Prostate gland (tissue), 2 donors: ENCODE measurements at regions of chr3 and their contacts with region 1.

Region 1: GRCh38 chr3:182837855-182838454 is 44.7 kb downstream of the ATP11B start:
- DNase-seq: no peak
- H3K4me3 ChIP-seq: no peak overlapping the region
- H3K27ac ChIP-seq: no peak overlapping the region
- H3K4me1 ChIP-seq: no peaks in the 10 kb centered on the region
- H3K27me3 ChIP-seq: no peaks in the 10 kb centered on the region
- CTCF ChIP-seq: peak in 3 of 4 experiments; percentile 42 to 50 (median 46)
- POLR2A ChIP-seq: no peak

Region 2: DNA sequence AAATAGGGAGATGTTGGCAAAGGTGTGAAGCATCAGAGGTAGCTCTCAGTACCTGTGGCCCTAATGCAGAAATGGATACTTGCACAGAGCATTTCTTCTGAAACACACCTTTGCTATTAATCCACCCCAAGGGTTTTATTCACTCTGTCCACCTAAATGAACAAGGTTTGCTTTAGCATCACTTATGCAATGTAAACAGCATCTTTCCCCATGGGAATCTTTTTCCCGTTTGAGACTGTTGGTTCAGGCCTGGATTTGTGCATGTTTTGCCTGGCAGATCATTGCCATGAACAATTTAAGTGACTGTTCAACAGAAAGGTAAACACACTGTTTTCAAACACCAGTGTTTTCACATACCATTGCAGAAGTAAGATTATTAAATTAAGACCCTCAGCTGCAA is 617.9 kb before region 1 on chr3:
- intact Hi-C with region 1: no loop called
- DNase-seq: no peak
- H3K4me3 ChIP-seq: no peak overlapping the region
- H3K27ac ChIP-seq: no peak overlapping the region
- H3K4me1 ChIP-seq: no peaks in the 10 kb centered on the region
- H3K27me3 ChIP-seq: no peaks in the 10 kb centered on the region
- CTCF ChIP-seq: no peak
- POLR2A ChIP-seq: no peak

Region 3: DNA sequence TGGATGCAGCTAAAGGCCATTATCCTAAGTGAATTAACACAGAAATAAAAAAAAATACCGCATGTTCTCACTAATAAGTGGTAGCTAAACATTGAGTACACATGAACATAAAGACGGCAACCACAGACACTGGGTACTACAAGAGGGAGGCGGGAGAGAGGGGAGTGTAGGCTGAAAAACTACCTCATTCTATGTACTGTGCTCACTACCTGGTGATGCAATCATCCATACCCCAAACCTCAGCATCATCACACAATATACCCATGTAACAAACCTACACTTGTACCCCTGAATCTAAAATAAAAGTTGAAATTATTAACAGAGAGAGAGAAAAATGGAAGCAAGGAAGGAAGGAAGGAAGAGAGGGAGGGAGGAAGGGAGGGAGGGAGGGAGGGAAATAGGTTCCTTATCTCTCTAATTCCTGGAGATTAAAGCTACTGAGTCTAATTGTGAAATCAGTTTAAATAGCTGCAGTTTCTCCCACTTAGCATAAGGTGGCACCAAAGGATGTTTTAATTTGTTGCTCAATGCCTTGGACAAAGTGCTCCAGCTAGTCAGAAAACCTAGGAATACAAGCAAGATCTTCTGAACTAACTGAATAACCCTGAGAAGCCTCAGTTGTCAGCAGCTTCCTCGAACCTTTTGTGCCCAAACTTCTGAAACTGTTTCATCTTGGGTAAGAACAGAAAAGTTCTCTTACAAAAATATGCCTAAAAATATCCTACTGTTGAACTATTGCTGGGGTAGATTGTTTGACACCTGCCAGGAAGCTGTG is 124.0 kb before region 1 on chr3:
- intact Hi-C with region 1: loop called (anchors 5 kb)
- DNase-seq: no peak
- H3K4me3 ChIP-seq: no peak overlapping the region
- H3K27ac ChIP-seq: no peak overlapping the region
- H3K4me1 ChIP-seq: no peaks in the 10 kb centered on the region
- H3K27me3 ChIP-seq: no peaks in the 10 kb centered on the region
- CTCF ChIP-seq: peak in 3 of 4 experiments; percentile 29 to 70 (median 68)
- POLR2A ChIP-seq: no peak

Region 4: GRCh38 chr3:182909318-182910040 is 71.5 kb after region 1 on chr3:
- intact Hi-C with region 1: no loop called
- DNase-seq: no peak
- H3K4me3 ChIP-seq: no peak overlapping the region
- H3K27ac ChIP-seq: no peak overlapping the region
- H3K4me1 ChIP-seq: no peaks in the 10 kb centered on the region
- H3K27me3 ChIP-seq: no peaks in the 10 kb centered on the region
- CTCF ChIP-seq: peak in 3 of 4 experiments; percentile 27 to 49 (median 40)
- POLR2A ChIP-seq: no peak

Region 5: DNA sequence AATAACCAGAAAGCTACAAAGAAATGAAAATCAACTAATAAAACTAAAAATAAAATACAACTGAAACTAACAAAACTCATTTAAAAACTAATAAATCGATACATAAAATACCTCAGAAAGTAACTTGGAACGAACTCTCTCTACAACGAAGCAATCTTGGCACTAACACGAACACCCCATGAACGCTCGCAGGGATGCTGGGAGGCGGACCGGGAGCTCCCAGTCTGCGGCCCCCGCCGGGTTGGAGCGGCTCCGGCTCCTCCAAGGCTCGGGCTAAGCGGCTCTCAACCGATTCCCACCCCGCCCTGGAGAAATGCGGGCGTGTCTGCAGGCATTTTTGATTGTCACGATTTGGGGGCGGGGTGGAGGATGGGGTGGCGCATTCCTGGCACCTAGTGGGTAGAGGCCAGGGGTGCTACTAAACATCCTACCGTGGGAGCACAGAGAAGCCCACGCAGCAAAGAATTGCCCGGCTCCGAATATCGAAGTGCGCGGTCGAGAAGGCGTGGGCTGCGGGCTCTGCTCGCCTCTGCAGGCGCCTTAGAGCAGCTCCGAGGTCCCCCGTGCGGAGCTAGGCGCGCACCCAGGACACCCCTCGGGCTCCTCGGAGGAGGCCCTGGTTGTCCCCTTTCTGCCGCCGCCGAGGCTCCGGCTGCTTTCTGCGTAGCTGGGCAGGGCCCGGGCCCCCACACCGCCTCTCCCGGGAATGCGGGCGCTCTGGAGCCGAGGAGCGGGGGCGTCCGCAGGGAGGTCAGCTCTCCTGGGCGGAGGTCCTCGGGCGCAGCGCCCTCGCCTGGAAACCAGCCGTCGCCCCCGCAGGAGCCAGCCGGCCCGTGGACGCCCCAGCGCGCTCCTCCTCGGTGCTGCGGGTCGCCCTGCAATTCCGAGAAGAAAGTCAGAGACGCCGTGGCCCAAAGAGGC is 340.9 kb after region 1 on chr3:
- intact Hi-C with region 1: no loop called
- DNase-seq: peak; percentile 15
- H3K4me3 ChIP-seq: peak overlapping the region; percentile 36 to 39
- H3K27ac ChIP-seq: peak overlapping the region; percentile 12 to 39
- H3K4me1 ChIP-seq: no peaks in the 10 kb centered on the region
- H3K27me3 ChIP-seq: no peaks in the 10 kb centered on the region
- CTCF ChIP-seq: peak in 2 of 4 experiments; percentile 12 to 27
- POLR2A ChIP-seq: no peak